Cardiac septum (tissue), 1 donor: ENCODE measurements at regions of chr7 and their contacts with region 1.

Region 1: GRCh38 chr7:151539088-151539671 is 19.5 kb upstream of the RHEB start:
- DNase-seq: no peak

Region 2: DNA sequence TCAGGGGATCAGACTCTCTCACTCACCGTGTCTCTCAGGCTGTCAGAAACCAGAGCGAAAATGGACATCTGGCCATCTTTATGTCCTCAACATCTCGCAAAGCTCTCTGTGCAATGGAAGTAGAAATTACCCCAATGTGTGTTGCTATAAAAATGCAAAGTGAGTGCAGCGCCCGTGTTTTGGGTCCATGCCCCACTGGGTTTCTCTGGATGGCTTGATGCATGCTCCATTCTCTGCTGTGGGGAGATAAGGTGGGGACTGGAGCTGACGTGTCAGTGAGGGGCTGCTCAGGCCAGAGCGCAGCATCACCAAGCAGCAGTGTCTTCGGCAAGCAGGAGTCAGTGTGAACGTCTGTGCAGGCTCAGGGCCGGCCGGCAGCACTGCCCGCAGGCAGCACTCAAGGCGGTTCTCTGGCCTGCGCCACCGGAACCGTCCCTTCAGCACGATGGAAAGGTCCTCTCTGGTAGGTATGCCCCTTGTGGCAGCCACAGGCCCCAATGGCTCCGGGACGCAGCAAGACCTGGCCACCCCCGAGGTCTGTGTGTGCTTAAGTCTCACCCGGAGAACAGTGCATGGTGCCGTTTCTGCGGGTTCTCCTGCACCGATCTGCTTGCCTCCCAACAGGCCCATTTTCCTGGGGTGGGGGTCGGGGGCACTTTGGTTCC is 159.5 kb before region 1 on chr7:
- intact Hi-C with region 1: loop called (anchors 10 kb)
- DNase-seq: no peak